IMR-90 (cell line): ENCODE measurements at regions of chrX and their contacts with region 1.

Region 1: DNA sequence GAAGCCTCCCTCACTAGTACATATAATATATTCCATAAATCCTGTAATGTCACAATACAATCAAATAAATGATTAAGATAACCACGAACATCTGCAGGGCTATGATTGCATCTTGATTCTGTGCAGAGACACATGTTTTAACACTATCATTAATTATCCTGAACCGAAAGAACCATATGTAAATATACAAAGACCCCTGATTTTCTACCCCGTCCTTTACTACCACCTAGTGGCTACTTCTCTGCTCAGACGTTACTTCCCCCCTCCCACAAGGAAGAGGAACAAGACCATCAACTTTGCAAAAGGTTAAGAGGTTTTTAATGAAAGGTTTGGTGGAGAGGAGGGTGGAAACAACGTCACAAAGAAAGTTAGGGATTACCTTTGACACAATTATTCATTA is 134.0 kb downstream of the COL4A6 start:
- DNase-seq: peak; percentile 7
- ATAC-seq: 0 out of 2 replicates have a peak, but pooled peaks have one; percentile 21
- H3K4me3 ChIP-seq: no peak overlapping the region
- H3K27ac ChIP-seq: no peak overlapping the region; the same call in 1 of the 2 replicates
- H3K4me1 ChIP-seq: peaks cover 10% of the 10 kb centered on the region
- H3K27me3 ChIP-seq: peaks cover 6% of the 10 kb centered on the region; the same call in 1 of the 2 replicates
- CTCF ChIP-seq: peak; percentile 44; the same call in 1 of the 2 replicates
- POLR2A ChIP-seq: no peak
- RAD21 ChIP-seq: peak; percentile 38

Region 2: GRCh38 chrX:108165383-108166111 is 138.7 kb before region 1 on chrX:
- CTCF ChIA-PET with region 1: interaction called, 4 read pairs
- POLR2A ChIA-PET with region 1: no interaction called
- dilution Hi-C with region 1: no loop called
- in situ Hi-C with region 1: no loop called
- intact Hi-C with region 1: loop called (anchors 10 kb)
- DNase-seq: peak; percentile 51
- ATAC-seq: peak; percentile 96
- H3K4me3 ChIP-seq: no peak overlapping the region
- H3K27ac ChIP-seq: no peak overlapping the region
- H3K4me1 ChIP-seq: no peaks in the 10 kb centered on the region; the same call in 1 of the 2 replicates
- H3K27me3 ChIP-seq: peaks cover 3% of the 10 kb centered on the region; the same call in 1 of the 2 replicates
- CTCF ChIP-seq: peak; percentile 49
- POLR2A ChIP-seq: no peak
- RAD21 ChIP-seq: peak; percentile 38

Region 3: GRCh38 chrX:108224727-108225621 is 79.2 kb before region 1 on chrX:
- CTCF ChIA-PET with region 1: interaction called, 9 read pairs
- POLR2A ChIA-PET with region 1: no interaction called
- dilution Hi-C with region 1: no loop called
- in situ Hi-C with region 1: no loop called
- intact Hi-C with region 1: loop called (anchors 1 kb)
- DNase-seq: peak; percentile 31
- ATAC-seq: peak; percentile 63
- H3K4me3 ChIP-seq: no peak overlapping the region
- H3K27ac ChIP-seq: peak overlapping the region; percentile 20; the same call in 1 of the 2 replicates
- H3K4me1 ChIP-seq: peaks cover 2% of the 10 kb centered on the region; the same call in 1 of the 2 replicates
- H3K27me3 ChIP-seq: peaks cover 14% of the 10 kb centered on the region
- CTCF ChIP-seq: peak; percentile 59
- POLR2A ChIP-seq: no peak
- RAD21 ChIP-seq: peak; percentile 69

Region 4: DNA sequence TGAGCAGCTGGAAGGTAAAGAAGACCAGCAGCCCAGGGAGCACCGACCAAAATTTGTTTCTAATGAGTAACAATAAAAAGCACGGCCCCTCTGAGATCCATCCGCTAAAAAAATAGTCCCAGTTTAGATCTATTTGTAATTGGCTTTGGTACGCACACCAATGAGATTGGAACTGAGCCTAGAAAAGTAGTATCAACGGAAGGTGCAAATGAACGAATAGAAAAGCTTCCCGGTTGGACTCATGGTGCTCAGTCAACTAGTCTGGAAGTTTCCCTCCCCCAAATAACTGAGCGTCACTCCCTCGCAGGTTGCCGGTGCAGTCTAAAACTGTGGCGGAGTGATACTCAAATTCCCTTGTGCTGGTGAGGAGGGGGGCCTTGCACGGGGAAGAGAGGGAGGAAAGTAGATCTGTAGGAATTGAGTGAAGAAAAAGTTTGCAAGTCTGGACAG is 135.2 kb after region 1 on chrX and contains the start of gene COL4A5:
- CTCF ChIA-PET with region 1: no interaction called
- POLR2A ChIA-PET with region 1: no interaction called
- dilution Hi-C with region 1: no loop called
- in situ Hi-C with region 1: no loop called
- intact Hi-C with region 1: loop called (anchors 5 kb)
- DNase-seq: peak; percentile 80
- ATAC-seq: peak; percentile 73
- H3K4me3 ChIP-seq: peak within 1 kb of the TSS; percentile 89
- H3K27ac ChIP-seq: peak within 1 kb of the TSS; percentile 83
- H3K4me1 ChIP-seq: no peaks in the 10 kb centered on the region
- H3K27me3 ChIP-seq: peaks cover 5% of the 10 kb centered on the region
- CTCF ChIP-seq: no peak
- POLR2A ChIP-seq: no peak
- RAD21 ChIP-seq: no peak
- total RNA-seq, gene COL4A5: 15.0 and 16.3 TPM in 2 replicates

Region 5: DNA sequence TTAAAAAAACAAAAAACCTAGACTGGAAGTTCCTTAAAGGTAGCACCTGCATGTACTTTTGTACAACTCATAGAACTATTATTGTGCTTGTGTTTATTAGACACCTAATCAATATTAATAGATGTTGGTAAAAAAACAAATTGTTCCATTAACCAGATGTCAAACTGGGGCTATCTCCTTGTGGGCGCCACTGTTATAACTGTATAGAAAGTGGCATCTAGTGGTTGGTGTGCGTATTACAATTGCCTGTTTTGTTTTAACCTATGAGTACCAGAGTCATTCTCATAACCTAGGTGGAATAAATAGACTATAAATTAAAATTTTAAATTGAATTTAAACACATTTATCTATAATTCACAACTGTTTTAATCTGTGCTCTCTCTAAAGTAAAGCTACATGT is 232.8 kb after region 1 on chrX:
- CTCF ChIA-PET with region 1: interaction called, 3 read pairs
- POLR2A ChIA-PET with region 1: no interaction called
- dilution Hi-C with region 1: no loop called
- in situ Hi-C with region 1: no loop called
- intact Hi-C with region 1: loop called (anchors 2 kb)
- DNase-seq: peak; percentile 38
- ATAC-seq: peak; percentile 83
- H3K4me3 ChIP-seq: no peak overlapping the region
- H3K27ac ChIP-seq: no peak overlapping the region
- H3K4me1 ChIP-seq: no peaks in the 10 kb centered on the region
- H3K27me3 ChIP-seq: no peaks in the 10 kb centered on the region
- CTCF ChIP-seq: peak; percentile 67
- POLR2A ChIP-seq: no peak
- RAD21 ChIP-seq: peak; percentile 72